Esophagus squamous epithelium (tissue), 5 donors: ENCODE measurements at regions of chr7 and their contacts with region 1.

Region 1: GRCh38 chr7:42843205-42843800 is 68.6 kb downstream of the C7orf25 start:
- DNase-seq: no peak
- H3K4me3 ChIP-seq: peak overlapping the region in 1 of 4 donors; percentile 21
- H3K27ac ChIP-seq: no peak overlapping the region
- H3K4me1 ChIP-seq: no peaks in the 10 kb centered on the region
- H3K27me3 ChIP-seq: peaks cover 0 to 30% (median 0%) of the 10 kb centered on the region in 4 donors
- CTCF ChIP-seq: peak in 5 of 6 experiments; percentile 23 to 51 (median 32)
- POLR2A ChIP-seq: no peak

Region 2: GRCh38 chr7:41955893-41956675 is 887.2 kb before region 1 on chr7:
- intact Hi-C with region 1: loop called (anchors 10 kb)
- DNase-seq: peak; percentile 36
- H3K4me3 ChIP-seq: peak overlapping the region in 2 of 4 donors; percentile 11 to 16
- H3K27ac ChIP-seq: peak overlapping the region in 3 of 4 donors; percentile 16 to 60 (median 48)
- H3K4me1 ChIP-seq: peaks cover 22 to 32% (median 29%) of the 10 kb centered on the region in 3 donors
- H3K27me3 ChIP-seq: peaks cover 0 to 8% (median 0%) of the 10 kb centered on the region in 4 donors
- CTCF ChIP-seq: no peak
- POLR2A ChIP-seq: no peak

Region 3: GRCh38 chr7:42453931-42454361 is 389.4 kb before region 1 on chr7:
- intact Hi-C with region 1: no loop called
- DNase-seq: no peak
- H3K4me3 ChIP-seq: no peak overlapping the region
- H3K27ac ChIP-seq: no peak overlapping the region
- H3K4me1 ChIP-seq: no peaks in the 10 kb centered on the region
- H3K27me3 ChIP-seq: no peaks in the 10 kb centered on the region
- CTCF ChIP-seq: no peak
- POLR2A ChIP-seq: no peak

Region 4: DNA sequence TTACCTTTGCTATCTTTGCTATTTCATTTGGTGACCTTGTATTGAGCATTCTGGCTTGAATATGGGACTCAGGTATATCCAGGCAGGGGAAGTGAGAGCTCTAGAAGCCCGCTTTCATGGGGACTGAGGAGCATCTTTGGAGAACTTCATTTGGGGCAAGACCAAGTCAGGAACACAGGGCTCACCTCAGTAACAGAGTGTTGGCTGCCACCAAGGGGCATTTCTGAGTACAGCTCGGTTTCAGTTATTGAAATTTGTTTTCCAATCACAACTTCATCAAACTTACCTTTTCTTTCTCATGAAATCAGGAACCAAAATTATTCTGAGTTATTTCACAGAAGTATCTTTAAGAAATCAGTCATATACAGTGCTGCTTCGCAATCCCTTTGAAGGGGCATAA is 268.6 kb before region 1 on chr7:
- intact Hi-C with region 1: no loop called
- DNase-seq: no peak
- H3K4me3 ChIP-seq: no peak overlapping the region
- H3K27ac ChIP-seq: peak overlapping the region in 1 of 4 donors; percentile 19
- H3K4me1 ChIP-seq: peaks cover 0 to 42% (median 8%) of the 10 kb centered on the region in 3 donors
- H3K27me3 ChIP-seq: no peaks in the 10 kb centered on the region
- CTCF ChIP-seq: peak in 3 of 6 experiments; percentile 11 to 41 (median 28)
- POLR2A ChIP-seq: no peak